Dendritic cell treated with granulocyte-macrophage colony-stimulating factor and Interleukin-4, amounts not matched to agents 40 ng/mL and 50 ng/mL, for 4 days (primary cell): ENCODE measurements at regions of chr3 and their contacts with region 1.

Region 1: GRCh38 chr3:160531311-160531710 is 34.1 kb downstream of the KPNA4 start:
- H3K4me3 Mint-ChIP-seq: no peak overlapping the region
- H3K27ac Mint-ChIP-seq: no peak overlapping the region
- H3K4me1 Mint-ChIP-seq: no peaks in the 10 kb centered on the region
- H3K27me3 Mint-ChIP-seq: no peaks in the 10 kb centered on the region

Region 2: DNA sequence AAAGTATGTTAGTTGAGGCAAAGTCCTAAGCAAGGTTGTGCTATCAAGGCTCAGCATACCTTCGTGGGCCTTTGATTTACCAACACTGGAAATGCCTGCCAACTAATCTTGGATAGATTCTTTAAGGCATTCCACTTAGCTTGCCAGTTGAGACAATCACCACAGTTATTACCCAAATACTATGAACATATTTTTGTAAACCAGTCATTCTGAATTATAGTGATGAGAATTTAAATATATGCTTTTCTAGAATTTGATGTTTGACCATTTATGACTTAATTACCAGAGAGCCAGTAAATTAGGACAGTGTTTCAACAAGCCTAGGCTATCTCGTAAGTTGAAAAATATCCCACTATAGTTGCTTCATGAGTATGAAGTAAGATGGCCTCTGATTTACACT is 97.2 kb before region 1 on chr3:
- intact Hi-C with region 1: no loop called
- H3K4me3 Mint-ChIP-seq: no peak overlapping the region
- H3K27ac Mint-ChIP-seq: no peak overlapping the region
- H3K4me1 Mint-ChIP-seq: no peaks in the 10 kb centered on the region
- H3K27me3 Mint-ChIP-seq: no peaks in the 10 kb centered on the region

Region 3: DNA sequence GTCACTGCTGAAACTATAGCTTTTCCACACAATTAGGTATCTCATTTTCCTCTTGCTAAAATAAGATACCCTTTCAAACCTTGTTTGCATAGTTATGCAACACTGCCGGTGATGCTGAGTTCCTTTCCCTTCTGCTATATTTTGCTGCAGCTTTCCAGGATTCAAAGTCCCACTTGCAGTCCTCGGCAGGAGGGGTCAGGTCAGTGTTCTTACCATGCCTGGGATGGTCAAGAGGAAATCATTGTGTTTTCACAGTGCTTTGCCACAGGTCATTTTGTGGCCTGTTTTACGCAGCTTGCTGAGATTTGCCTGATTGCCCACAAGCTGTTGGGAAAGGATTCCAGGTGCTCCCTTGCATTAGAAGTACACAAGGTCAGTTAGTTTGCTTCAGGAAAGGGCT is 417.0 kb after region 1 on chr3:
- intact Hi-C with region 1: no loop called
- H3K4me3 Mint-ChIP-seq: no peak overlapping the region
- H3K27ac Mint-ChIP-seq: no peak overlapping the region
- H3K4me1 Mint-ChIP-seq: peaks cover 11% of the 10 kb centered on the region
- H3K27me3 Mint-ChIP-seq: no peaks in the 10 kb centered on the region

Region 4: DNA sequence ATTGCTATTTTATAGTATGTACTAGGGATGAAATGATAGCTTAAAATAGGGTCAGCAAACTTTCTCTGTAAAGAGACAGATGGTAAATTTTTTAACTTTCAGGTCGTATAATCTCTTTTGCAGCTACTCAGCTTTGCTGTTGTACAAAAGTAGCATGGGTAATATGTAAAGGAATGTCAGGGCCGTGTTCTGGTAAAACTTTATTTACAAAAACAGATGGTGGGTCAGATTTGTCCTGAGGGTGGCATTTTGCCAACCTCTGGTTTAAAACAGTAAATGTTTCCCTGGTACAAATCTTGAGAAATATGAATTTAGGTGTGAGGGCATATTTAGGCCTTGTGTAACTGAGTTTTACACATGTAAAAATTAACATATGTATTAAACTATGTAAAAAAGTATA is 708.4 kb after region 1 on chr3:
- intact Hi-C with region 1: loop called (anchors 10 kb)
- H3K4me3 Mint-ChIP-seq: no peak overlapping the region
- H3K27ac Mint-ChIP-seq: no peak overlapping the region
- H3K4me1 Mint-ChIP-seq: peaks cover 4% of the 10 kb centered on the region
- H3K27me3 Mint-ChIP-seq: no peaks in the 10 kb centered on the region